K562 (cell line): ENCODE measurements at regions of chr3 and their contacts with region 1.

Region 1: DNA sequence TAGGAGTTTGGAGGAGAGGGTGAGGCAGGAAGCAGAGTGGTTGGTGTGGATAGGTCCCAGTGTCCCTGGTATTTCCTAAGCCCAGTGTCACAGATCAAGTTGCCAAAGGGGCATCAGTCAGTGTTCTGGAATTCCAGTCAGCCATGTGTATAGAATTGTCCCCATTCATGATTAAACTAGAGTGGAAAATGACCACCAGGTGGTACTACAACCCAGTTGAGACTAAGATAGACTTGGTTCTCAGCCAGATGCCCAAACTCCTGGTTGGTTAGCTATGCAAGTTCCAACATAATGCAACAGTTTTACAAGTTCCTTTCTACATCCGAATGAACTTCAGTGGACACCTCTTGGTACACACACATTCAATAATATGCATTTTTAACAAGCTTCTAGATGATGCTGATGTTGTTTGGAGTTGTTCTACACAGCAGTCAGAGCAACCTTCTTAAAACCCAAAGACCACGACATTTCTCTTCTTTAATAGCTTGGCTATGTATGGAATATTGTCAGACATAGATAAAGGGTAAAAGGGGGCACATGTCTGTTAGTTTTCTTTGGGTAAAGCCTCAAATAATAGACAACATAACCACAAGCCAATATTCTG is 8.4 kb upstream of the ATR start:
- DNase-seq: peak; percentile 43 to 77 (median 54)
- ATAC-seq: peak; percentile 93
- H3K4me3 ChIP-seq: no peak overlapping the region
- H3K27ac ChIP-seq: no peak overlapping the region
- H3K4me1 ChIP-seq: no peaks in the 10 kb centered on the region
- H3K27me3 ChIP-seq: no peaks in the 10 kb centered on the region
- CTCF ChIP-seq: peak; percentile 70 to 83 (median 72)
- EP300 ChIP-seq: no peak
- POLR2A ChIP-seq: no peak
- RAD21 ChIP-seq: peak; percentile 90 to 93

Region 2: GRCh38 chr3:142633073-142633472 is 46.2 kb after region 1 on chr3:
- CTCF ChIA-PET with region 1: no interaction called
- POLR2A ChIA-PET with region 1: no interaction called
- in situ Hi-C with region 1: no loop called
- intact Hi-C with region 1: no loop called
- DNase-seq: no peak
- ATAC-seq: no peak
- H3K4me3 ChIP-seq: no peak overlapping the region
- H3K27ac ChIP-seq: no peak overlapping the region
- H3K4me1 ChIP-seq: no peaks in the 10 kb centered on the region; a peak in 1 of 5 replicates
- H3K27me3 ChIP-seq: no peaks in the 10 kb centered on the region
- CTCF ChIP-seq: no peak
- EP300 ChIP-seq: no peak
- POLR2A ChIP-seq: no peak
- RAD21 ChIP-seq: no peak

Region 3: DNA sequence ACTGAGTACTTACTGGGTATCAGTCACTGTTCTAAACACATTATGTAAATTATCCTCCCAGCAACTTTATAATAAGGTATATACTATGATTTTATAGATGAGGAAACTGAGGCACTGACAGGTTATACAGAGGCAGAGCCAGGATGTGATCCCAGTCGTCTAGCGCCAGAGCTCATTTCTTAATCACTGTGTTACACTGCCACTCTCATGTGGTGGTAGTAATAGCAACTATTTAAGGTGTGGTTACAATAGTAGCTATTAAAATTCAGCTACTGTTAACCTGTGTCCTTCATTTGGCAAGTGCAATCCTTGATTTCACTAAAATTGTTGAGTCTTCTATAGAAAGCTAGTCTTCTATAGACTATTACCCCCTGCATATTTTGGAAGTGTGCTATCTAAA is 93.8 kb after region 1 on chr3:
- CTCF ChIA-PET with region 1: interaction called, 8 read pairs
- POLR2A ChIA-PET with region 1: interaction called, 3 read pairs
- in situ Hi-C with region 1: no loop called
- intact Hi-C with region 1: loop called (anchors 1 kb)
- DNase-seq: no peak
- ATAC-seq: no peak
- H3K4me3 ChIP-seq: no peak overlapping the region
- H3K27ac ChIP-seq: no peak overlapping the region
- H3K4me1 ChIP-seq: no peaks in the 10 kb centered on the region
- H3K27me3 ChIP-seq: no peaks in the 10 kb centered on the region
- CTCF ChIP-seq: peak in 1 of 3 experiments; percentile 31; a peak in 1 of 6 replicates
- EP300 ChIP-seq: no peak
- POLR2A ChIP-seq: no peak
- RAD21 ChIP-seq: peak in 1 of 2 experiments; percentile 37; a peak in 2 of 4 replicates

Region 4: GRCh38 chr3:142904639-142905436 is 317.9 kb after region 1 on chr3:
- CTCF ChIA-PET with region 1: interaction called, 13 read pairs
- POLR2A ChIA-PET with region 1: no interaction called
- in situ Hi-C with region 1: loop called (anchors 10 kb)
- intact Hi-C with region 1: loop called (anchors 2 kb)
- DNase-seq: peak in 2 of 4 experiments; percentile 35 to 49
- ATAC-seq: peak; percentile 81
- H3K4me3 ChIP-seq: no peak overlapping the region
- H3K27ac ChIP-seq: no peak overlapping the region
- H3K4me1 ChIP-seq: no peaks in the 10 kb centered on the region; a peak in 2 of 5 replicates
- H3K27me3 ChIP-seq: 0 out of 5 replicates have a peak, but pooled peaks cover 0 to 3% of the 10 kb centered on the region in 2 experiments
- CTCF ChIP-seq: peak; percentile 36 to 56 (median 53); a peak in 4 of 6 replicates
- EP300 ChIP-seq: no peak
- POLR2A ChIP-seq: no peak
- RAD21 ChIP-seq: peak; percentile 63 to 77